Dorsolateral prefrontal cortex (tissue), 120 donors: ENCODE measurements at regions of chr1 and their contacts with region 1.

Region 1: GRCh38 chr1:145845514-145846161 is at the start of gene NUDT17:
- DNase-seq: peak; percentile 57 to 79 (median 72)
- H3K4me3 ChIP-seq: peak within 1 kb of the TSS; percentile 45 to 82 (median 66)
- H3K27ac ChIP-seq: peak within 1 kb of the TSS in 57 of 59 donors; percentile 17 to 89 (median 76)
- H3K27me3 ChIP-seq: no peaks in the 10 kb centered on the region
- CTCF ChIP-seq: peak; percentile 52 to 95 (median 89)
- total RNA-seq, gene NUDT17: 2.6 to 10.1 (median 5.5) TPM

Region 2: GRCh38 chr1:145885738-145886287 is 40.2 kb after region 1 on chr1 and contains the start of gene ANKRD35:
- intact Hi-C with region 1: no loop called
- DNase-seq: peak; percentile 78 to 91 (median 88)
- H3K4me3 ChIP-seq: peak within 1 kb of the TSS; percentile 62 to 99 (median 77)
- H3K27ac ChIP-seq: peak within 1 kb of the TSS in 30 of 59 donors; percentile 5 to 79 (median 50)
- H3K27me3 ChIP-seq: no peaks in the 10 kb centered on the region
- CTCF ChIP-seq: peak in 6 of 56 donors; percentile 3 to 25 (median 18)
- total RNA-seq, gene ANKRD35: 2.2 to 12.7 (median 7.2) TPM

Region 3: GRCh38 chr1:146012737-146013403 is 167.2 kb after region 1 on chr1:
- intact Hi-C with region 1: loop called (anchors 5 kb)
- DNase-seq: peak in 1 of 10 donors; percentile 40
- H3K4me3 ChIP-seq: peak overlapping the region in 3 of 59 donors; percentile 15 to 26 (median 20)
- H3K27ac ChIP-seq: no peak overlapping the region
- H3K27me3 ChIP-seq: no peaks in the 10 kb centered on the region
- CTCF ChIP-seq: peak; percentile 38 to 97 (median 78)